ENCODE measurements at regions of chr12 and their contacts with region 1.

Region 1: GRCh38 chr12:57111031-57111734 is at the start of gene STAT6:
- DNase-seq: peak; percentile 89
- ATAC-seq: peak; percentile 65
- H3K4me3 Mint-ChIP-seq: peak within 1 kb of the TSS; percentile 98
- H3K27ac Mint-ChIP-seq: peak within 1 kb of the TSS; percentile 97
- H3K4me1 Mint-ChIP-seq: peaks cover 50% of the 10 kb centered on the region
- H3K27me3 Mint-ChIP-seq: no peaks in the 10 kb centered on the region
- total RNA-seq, gene STAT6: 250 to 288 TPM

Region 2: DNA sequence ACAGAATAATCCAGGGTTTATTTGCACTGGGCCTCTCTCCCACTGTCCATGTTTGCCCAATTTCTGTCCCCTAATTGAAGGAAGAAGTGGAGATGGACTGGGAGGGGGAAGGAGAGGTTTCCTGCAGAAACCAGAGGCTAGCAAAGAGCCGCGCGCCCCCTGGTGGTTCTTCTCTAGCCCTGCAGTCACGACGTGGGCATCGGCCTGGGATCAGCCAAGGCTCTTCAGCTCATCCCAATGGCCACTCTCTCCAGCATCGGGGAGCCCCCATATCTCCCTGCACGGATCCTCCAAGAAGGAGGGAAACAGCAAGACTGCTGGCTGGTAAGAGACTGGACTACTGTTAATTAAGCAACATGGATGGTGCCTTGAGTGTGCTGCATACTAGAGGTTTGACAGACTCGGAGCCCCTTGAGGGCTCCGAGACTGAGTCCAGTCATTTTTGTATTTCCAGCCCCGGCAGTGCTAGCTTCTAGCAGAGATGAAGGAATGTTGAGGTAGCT is 123.6 kb before region 1 on chr12:
- CTCF ChIA-PET with region 1: interaction called, 20 read pairs
- POLR2A ChIA-PET with region 1: no interaction called
- intact Hi-C with region 1: no loop called
- DNase-seq: peak; percentile 87
- ATAC-seq: peak; percentile 76
- H3K4me3 Mint-ChIP-seq: no peak overlapping the region
- H3K27ac Mint-ChIP-seq: no peak overlapping the region
- H3K4me1 Mint-ChIP-seq: peaks cover 11% of the 10 kb centered on the region
- H3K27me3 Mint-ChIP-seq: no peaks in the 10 kb centered on the region

Region 3: GRCh38 chr12:57031138-57031725 is 80.0 kb before region 1 on chr12:
- CTCF ChIA-PET with region 1: interaction called, 11 read pairs
- POLR2A ChIA-PET with region 1: no interaction called
- intact Hi-C with region 1: no loop called
- DNase-seq: peak; percentile 44
- ATAC-seq: peak; percentile 43
- H3K4me3 Mint-ChIP-seq: no peak overlapping the region
- H3K27ac Mint-ChIP-seq: peak overlapping the region; percentile 55
- H3K4me1 Mint-ChIP-seq: peaks cover 46% of the 10 kb centered on the region
- H3K27me3 Mint-ChIP-seq: no peaks in the 10 kb centered on the region

Region 4: DNA sequence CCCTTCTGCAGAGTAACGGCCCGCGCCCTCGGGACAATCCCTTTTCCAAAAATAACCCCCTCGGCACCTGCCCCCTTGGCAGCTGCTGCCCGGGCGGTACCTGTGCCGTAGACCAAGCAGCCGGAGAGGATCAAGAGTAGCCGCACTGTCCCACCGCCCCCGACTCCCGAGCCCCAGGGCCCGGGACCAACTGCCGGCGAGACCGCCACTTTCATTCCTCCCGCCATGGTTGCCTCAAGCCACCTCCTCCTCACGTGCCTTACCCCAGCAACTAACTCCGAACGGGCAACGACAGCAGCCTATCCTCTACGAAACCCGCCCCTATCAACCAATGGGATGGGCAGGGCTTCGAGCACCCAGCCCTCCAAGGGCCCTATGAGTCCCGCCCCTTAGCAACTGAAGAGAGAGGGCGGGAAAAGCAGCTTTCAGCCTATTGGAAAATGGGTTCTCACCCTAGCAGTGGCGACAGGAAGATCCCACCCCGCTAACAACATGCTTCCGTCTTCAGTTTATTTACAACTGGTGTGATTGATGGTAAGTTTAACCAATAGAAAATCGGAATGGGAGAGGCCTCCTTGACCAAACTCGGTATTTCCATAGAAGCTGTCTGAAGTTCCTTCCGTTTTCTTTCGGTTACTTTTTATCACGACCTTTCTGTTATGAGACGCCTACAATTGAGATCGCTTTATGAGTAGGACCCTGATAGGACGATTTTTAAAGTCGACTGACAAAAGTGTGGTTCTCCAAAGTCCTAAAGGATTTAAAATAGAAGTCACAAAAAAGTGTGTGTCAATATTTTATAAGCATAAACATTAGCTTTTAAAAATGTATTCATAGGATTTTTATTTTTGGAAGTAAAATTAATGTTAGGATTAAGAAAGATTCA is 32.4 kb before region 1 on chr12 and contains the start of gene NEMP1:
- CTCF ChIA-PET with region 1: interaction called, 411 read pairs
- POLR2A ChIA-PET with region 1: interaction called, 35 read pairs
- intact Hi-C with region 1: no loop called
- DNase-seq: peak; percentile 97
- ATAC-seq: peak; percentile 95
- H3K4me3 Mint-ChIP-seq: peak within 1 kb of the TSS; percentile 97
- H3K27ac Mint-ChIP-seq: peak within 1 kb of the TSS; percentile 94
- H3K4me1 Mint-ChIP-seq: peaks cover 29% of the 10 kb centered on the region
- H3K27me3 Mint-ChIP-seq: no peaks in the 10 kb centered on the region
- total RNA-seq, gene NEMP1: 79.0 to 81.1 TPM

Region 5: DNA sequence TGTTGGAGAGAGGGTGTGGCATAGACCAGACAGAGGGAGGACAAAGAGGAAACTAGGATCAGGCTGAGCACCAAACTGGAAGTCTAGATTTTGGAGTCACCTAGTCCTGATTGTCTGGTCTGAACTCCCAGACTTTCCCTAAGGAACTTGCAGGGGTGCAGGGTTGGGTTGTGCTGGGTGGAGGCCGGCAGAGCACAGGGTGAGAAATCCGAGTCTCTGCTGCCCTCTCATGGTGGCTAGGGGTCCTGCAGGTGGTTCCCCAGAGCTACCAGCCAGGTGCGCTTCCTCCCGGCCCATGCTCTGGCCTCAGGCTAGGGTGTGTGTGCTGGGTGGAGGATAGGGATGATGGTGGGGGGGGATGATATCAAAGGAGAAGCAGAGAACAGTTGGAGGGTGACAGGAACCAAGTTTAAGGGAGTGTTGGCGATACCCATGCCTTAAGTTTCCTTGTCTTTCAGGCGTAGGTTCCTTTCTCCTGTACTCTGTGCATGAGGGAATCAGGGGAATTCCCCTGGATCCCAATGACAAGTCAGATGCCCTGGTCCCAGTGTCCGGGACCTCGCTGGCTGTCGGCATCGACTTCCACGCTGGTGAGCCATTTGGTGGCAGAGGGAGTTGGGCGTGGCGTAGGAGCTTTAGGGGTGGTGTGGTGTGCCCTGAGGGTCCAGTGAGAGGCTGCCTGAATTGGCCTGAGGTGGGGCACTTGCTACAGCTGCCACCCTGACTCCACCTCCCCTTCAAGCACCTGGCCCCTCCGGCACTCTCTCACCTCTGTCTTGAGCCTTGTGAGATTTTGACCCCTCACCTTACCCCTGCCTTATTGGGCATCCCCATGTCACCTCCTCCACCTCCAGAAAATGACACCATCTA is 72.0 kb after region 1 on chr12:
- CTCF ChIA-PET with region 1: interaction called, 18 read pairs
- POLR2A ChIA-PET with region 1: interaction called, 6 read pairs
- intact Hi-C with region 1: no loop called
- DNase-seq: peak; percentile 89
- ATAC-seq: peak; percentile 99
- H3K4me3 Mint-ChIP-seq: no peak overlapping the region
- H3K27ac Mint-ChIP-seq: no peak overlapping the region
- H3K4me1 Mint-ChIP-seq: peaks cover 2% of the 10 kb centered on the region
- H3K27me3 Mint-ChIP-seq: no peaks in the 10 kb centered on the region

Region 6: DNA sequence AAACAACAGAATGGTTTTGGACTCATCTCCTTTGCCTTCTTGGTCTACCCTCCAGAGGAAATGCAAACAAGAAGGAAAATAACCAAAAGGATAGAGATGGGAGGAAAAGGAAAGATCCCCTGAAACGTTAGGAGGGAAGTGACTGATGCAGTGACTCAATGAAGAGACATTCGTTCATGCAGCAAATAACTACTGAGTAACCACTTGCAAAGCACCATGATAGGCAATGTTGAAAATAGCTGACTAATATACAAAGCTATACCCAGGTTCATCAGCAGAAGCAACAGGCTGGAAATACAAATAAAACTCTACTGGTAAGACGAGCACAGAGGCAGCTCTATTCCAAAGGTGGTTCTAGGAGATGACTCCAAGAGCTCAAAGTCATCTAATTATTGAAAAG is 277.9 kb after region 1 on chr12:
- CTCF ChIA-PET with region 1: no interaction called
- POLR2A ChIA-PET with region 1: no interaction called
- intact Hi-C with region 1: no loop called
- DNase-seq: no peak
- ATAC-seq: peak; percentile 74
- H3K4me3 Mint-ChIP-seq: no peak overlapping the region
- H3K27ac Mint-ChIP-seq: no peak overlapping the region
- H3K4me1 Mint-ChIP-seq: peaks cover 9% of the 10 kb centered on the region
- H3K27me3 Mint-ChIP-seq: no peaks in the 10 kb centered on the region